ENCODE measurements at regions of chr20 and their contacts with region 1.

Region 1: DNA sequence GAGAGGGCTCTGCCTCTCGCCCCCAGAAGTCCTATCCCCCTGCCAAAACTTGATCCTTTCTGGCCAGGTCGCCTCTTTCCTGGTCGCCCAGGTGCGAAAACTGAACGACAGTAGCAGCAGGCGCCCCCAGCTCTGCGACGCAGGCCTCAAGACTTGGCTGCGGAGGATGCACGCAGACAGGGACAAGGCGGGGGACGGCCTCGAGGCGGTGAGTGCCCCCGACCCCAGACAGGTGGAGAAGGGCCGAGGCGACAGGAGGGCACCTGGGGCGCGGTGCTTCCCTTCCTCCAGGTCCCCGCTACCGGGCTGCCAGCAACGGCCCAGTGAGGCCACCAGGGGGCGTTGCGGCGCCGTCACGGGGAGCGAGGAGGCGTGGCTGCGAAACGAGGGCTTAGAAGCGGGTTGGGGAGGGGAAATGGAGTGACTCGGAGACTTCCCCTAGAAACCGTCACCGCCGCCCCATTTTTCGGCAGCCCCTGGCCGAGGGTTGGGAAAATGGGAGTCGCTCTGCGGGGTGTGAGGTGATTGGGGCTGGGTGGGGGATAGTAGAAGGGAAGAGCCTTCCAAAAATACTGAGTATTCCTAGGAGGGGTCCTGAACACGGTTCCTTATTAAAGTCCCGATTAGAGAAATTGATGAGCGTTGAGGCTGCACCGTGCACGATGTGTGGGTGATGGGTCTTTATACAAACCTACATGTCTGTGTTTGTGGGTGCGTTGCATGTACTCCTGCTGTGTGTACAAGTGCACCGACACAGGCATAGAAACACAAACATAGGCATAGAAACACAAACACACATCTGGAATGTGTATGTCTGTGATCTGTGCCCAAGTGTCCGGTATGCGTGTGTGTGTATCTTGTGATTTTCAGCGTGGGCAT is 44.6 kb downstream of the ARHGAP40 start:
- DNase-seq: peak; percentile 93
- H3K4me3 ChIP-seq: peak overlapping the region; percentile 32 to 51; a peak in 2 of 4 replicates
- H3K27ac ChIP-seq: no peak overlapping the region
- H3K4me1 ChIP-seq: peaks cover 0 to 7% of the 10 kb centered on the region in 2 experiments; a peak in 1 of 4 replicates
- H3K27me3 ChIP-seq: peaks cover 42% of the 10 kb centered on the region
- CTCF ChIP-seq: peak; percentile 88
- EP300 ChIP-seq: no peak
- RAD21 ChIP-seq: peak; percentile 91

Region 2: DNA sequence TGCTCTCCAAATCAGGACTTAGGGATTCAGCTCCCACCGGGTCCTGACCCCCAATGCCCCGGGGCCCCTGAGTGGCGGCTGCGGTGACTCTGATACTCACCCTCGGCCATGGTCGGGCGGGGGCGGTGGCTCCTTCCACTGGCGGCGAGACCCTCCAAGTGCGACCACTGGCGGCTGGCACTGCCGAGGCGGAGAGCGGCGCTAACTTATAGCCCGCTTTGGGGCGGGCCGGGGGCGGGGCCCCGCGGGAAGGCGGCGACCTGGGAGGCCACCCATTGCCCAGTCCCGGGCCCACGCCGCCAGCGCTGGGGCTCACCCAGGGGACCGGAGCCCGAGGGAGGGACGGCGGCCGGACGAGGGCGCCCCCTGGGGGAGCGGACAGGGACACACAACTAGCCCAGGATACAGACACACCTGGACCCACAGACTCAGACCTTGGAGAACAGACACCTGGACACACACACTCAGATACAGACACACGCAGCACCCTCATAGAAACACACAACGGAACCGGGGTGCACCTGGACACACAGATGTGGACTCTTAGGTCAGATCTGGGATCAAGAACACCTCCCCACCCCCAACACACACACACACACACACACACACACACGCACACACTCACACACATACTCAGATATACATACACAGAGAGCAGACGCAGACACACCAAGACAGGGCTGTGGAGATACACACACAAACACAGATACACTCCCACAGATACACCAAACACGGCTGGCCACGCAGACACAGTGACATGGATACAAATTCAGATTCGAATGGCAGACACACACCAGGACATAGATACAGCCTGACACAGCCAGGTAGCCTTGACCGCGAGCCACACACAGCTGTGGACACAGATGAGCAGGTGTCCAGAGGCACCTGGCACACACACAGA is 480.9 kb before region 1 on chr20 and contains the start of gene TGM2:
- CTCF ChIA-PET with region 1: no interaction called
- POLR2A ChIA-PET with region 1: no interaction called
- DNase-seq: peak; percentile 92
- H3K4me3 ChIP-seq: peak within 1 kb of the TSS; percentile 58 to 77
- H3K27ac ChIP-seq: peak within 1 kb of the TSS in 1 of 2 experiments; percentile 58; a peak in 3 of 4 replicates
- H3K4me1 ChIP-seq: peaks cover 35 to 36% of the 10 kb centered on the region in 2 experiments; a peak in 3 of 4 replicates
- H3K27me3 ChIP-seq: no peaks in the 10 kb centered on the region
- CTCF ChIP-seq: peak; percentile 87
- EP300 ChIP-seq: no peak
- RAD21 ChIP-seq: peak; percentile 81
- polyA plus RNA-seq, gene TGM2: 548 and 676 TPM in 2 replicates

Region 3: DNA sequence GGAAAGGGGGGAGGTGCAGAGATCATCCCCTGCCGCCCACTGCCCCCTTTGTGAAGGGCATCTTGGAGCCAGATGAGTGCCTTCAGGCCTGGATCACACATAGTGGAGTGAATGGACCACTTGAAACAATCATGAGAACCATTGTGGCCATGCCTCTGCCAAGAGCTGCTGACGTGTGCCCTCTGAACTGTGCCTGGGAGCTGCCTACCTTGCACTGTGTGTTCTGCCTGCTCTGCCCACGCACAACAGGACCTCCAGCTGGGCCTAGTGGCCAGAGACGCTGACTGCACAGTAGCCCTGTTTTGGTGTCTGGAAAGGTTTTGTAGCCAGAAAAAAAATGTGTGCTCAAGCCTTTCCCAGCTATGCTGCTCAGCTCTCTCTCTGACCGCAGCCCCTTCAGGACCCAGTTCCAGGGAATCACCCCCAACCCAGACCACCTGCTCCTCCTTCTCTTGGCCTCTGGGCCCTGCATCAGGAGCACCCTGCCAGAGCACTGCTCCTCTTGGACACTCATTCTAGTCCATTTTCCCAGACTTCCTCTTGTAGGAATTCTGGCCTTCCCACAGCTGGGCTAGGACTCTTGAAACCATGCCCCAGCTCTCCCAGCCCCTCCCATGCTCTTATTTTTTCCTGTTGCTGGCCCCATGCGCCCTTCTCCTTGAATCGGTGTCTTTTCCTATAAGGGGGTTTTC is 66.9 kb before region 1 on chr20:
- CTCF ChIA-PET with region 1: no interaction called
- POLR2A ChIA-PET with region 1: no interaction called
- DNase-seq: no peak
- H3K4me3 ChIP-seq: no peak overlapping the region
- H3K27ac ChIP-seq: peak overlapping the region in 1 of 2 experiments; percentile 60; a peak in 1 of 4 replicates
- H3K4me1 ChIP-seq: peaks cover 0 to 34% of the 10 kb centered on the region in 2 experiments; a peak in 1 of 4 replicates
- H3K27me3 ChIP-seq: no peaks in the 10 kb centered on the region
- CTCF ChIP-seq: no peak
- EP300 ChIP-seq: no peak
- RAD21 ChIP-seq: no peak

Region 4: DNA sequence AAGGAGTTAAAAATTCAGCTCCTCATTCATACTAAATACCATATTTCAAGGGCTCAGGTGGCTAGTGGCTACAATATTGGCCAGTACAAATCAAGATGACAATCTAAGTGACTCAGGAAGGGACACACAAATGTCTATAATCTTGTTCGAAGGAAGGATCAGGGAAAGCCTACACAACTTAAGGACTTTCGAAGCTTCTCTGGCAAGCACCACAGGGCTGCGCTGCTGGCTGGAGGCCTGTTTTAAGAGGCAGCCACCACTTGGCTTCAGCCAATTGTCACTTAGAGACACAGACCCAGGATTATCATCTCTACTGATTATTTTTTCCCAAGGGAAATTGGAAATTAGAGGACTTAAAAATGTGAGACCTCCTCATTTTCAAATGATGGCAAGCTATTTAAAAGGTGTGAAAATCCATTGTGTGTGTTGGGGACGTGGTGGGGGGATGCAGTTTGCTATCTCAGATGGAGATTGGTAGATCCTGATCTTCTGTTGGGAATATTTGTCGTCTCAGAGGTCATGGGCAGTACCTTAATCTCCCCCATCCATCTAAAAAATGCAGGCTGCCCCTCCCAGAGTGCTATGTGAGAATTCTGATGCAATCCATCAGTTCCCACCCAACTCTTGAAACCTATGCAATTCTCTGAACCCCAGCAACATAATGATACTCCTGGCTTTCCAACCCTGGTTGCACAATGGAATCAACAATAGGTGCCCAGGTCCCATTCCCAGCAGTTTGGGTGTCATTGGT is 33.3 kb before region 1 on chr20:
- CTCF ChIA-PET with region 1: interaction called, 12 read pairs
- POLR2A ChIA-PET with region 1: no interaction called
- DNase-seq: no peak
- H3K4me3 ChIP-seq: no peak overlapping the region
- H3K27ac ChIP-seq: no peak overlapping the region
- H3K4me1 ChIP-seq: peaks cover 0 to 6% of the 10 kb centered on the region in 2 experiments; a peak in 2 of 4 replicates
- H3K27me3 ChIP-seq: no peaks in the 10 kb centered on the region
- CTCF ChIP-seq: no peak
- EP300 ChIP-seq: no peak
- RAD21 ChIP-seq: no peak

Region 5: DNA sequence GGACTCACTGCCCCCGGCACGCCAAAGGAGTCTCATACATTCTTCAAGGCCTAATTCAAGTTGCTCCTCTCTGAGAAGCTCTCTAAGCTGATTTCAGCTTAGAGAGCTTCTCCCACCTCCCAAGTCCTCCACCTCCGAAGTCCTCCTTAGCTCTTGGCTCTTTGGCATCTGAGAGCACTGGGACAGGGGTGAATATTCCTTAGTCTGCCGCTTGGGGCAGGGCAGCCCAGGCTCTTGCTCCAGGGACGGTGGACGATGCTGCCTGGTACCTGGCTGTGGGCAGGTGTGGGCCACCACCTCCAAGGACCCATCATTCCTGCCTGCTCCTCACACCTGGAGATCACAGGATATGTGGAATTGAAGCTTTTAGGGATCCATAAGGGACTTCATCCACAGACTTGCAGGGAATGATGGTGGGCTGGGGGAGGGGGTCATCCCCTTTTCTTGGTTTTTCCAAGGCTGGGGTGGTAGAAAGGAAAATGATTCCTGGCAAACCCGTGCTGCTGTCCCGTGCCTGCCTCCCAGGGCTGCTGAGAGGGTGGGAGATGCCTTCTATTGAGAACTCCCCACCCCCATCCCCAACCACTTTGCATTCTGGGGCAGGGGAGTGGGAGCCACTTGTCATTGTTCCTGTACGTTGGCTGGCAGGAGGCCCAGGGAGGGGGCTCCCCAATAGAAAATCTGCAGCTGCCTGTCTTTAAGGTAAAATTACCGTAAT is 12.8 kb after region 1 on chr20:
- CTCF ChIA-PET with region 1: interaction called, 87 read pairs
- POLR2A ChIA-PET with region 1: no interaction called
- DNase-seq: peak; percentile 45
- H3K4me3 ChIP-seq: no peak overlapping the region; a peak in 1 of 4 replicates
- H3K27ac ChIP-seq: no peak overlapping the region
- H3K4me1 ChIP-seq: no peaks in the 10 kb centered on the region
- H3K27me3 ChIP-seq: no peaks in the 10 kb centered on the region
- CTCF ChIP-seq: peak; percentile 22; the same call in 1 of the 2 replicates
- EP300 ChIP-seq: no peak
- RAD21 ChIP-seq: peak; percentile 41

Region 6: DNA sequence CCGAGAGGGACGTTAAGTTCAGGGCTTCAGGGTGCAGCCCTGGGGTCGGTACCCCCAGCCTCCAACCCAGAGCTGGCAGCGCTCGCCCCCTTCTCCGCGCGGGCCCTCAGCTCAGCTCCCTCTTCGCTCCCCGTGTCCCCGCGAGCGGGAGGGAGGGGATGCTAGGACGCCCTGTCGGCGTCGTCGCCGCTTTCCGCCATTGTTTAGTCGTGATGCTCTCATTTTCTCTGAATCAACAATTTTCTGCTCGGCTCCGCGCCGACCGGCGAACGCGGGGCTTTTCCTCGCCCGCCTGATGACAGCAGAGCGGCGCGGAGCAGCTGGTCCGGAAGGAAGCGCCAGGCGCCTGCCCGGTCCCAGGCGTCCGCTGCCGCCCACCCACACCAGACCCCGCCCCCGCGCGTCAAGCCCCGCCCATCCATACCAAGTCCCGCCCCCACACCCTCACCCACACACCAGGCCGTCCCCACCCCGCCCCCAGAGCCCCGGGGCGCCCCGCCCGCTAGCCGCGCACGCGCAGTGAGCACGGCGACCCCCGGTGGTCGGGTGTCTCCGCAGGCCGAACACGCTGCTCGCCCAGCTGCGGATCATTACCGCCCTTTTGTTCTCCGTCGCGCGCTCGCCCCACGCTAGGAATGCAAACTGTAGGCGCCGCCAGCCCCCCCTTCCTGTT is 28.0 kb after region 1 on chr20:
- CTCF ChIA-PET with region 1: interaction called, 21 read pairs
- POLR2A ChIA-PET with region 1: no interaction called
- DNase-seq: peak; percentile 99
- H3K4me3 ChIP-seq: peak overlapping the region; percentile 59 to 76
- H3K27ac ChIP-seq: peak overlapping the region in 1 of 2 experiments; percentile 53; a peak in 1 of 4 replicates
- H3K4me1 ChIP-seq: peaks cover 0 to 15% of the 10 kb centered on the region in 2 experiments; a peak in 1 of 4 replicates
- H3K27me3 ChIP-seq: no peaks in the 10 kb centered on the region
- CTCF ChIP-seq: no peak
- EP300 ChIP-seq: no peak
- RAD21 ChIP-seq: no peak

Region 7: GRCh38 chr20:38706501-38706900 is 60.3 kb after region 1 on chr20:
- CTCF ChIA-PET with region 1: interaction called, 11 read pairs
- POLR2A ChIA-PET with region 1: no interaction called
- DNase-seq: peak; percentile 81
- H3K4me3 ChIP-seq: no peak overlapping the region
- H3K27ac ChIP-seq: no peak overlapping the region
- H3K4me1 ChIP-seq: peaks cover 0 to 8% of the 10 kb centered on the region in 2 experiments; a peak in 1 of 4 replicates
- H3K27me3 ChIP-seq: 0 out of 2 replicates have a peak, but pooled peaks cover 6% of the 10 kb centered on the region
- CTCF ChIP-seq: no peak
- EP300 ChIP-seq: peak in 1 of 2 experiments; percentile 76; a peak in 1 of 4 replicates
- RAD21 ChIP-seq: no peak; the same call in 1 of the 2 replicates

Region 8: GRCh38 chr20:38730989-38731737 is 84.9 kb after region 1 on chr20:
- CTCF ChIA-PET with region 1: interaction called, 510 read pairs
- POLR2A ChIA-PET with region 1: no interaction called
- DNase-seq: peak; percentile 90
- H3K4me3 ChIP-seq: peak overlapping the region; percentile 41 to 53
- H3K27ac ChIP-seq: no peak overlapping the region
- H3K4me1 ChIP-seq: peaks cover 0 to 16% of the 10 kb centered on the region in 2 experiments; a peak in 2 of 4 replicates
- H3K27me3 ChIP-seq: peaks cover 93% of the 10 kb centered on the region
- CTCF ChIP-seq: peak; percentile 97
- EP300 ChIP-seq: no peak
- RAD21 ChIP-seq: peak; percentile 73

Region 9: DNA sequence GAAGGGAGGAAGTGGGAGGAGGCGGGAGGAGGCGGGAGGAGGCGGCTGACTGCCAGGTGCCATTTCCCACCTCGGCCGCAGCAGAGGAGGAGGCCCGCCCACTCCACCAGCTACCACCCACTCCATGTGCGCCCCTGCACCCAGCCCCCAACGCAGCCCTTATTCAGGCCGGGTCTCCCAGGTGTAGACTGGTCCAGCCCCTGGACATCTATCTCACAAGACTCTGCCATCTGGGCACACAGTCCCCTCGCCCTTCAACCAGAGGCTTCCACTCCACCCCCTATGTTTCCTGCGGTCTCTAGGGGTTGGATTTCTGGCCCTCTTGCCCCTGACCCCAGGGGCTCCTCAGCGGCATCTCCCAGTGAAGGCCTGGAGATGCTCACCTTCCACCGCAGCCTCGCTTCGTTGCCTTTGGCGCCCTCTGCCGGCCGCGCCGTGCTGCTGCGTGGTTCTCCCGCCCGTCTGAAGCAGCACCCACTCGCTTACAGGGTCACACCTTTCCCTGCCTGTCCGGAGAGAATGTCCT is 247.4 kb after region 1 on chr20:
- CTCF ChIA-PET with region 1: interaction called, 13 read pairs
- POLR2A ChIA-PET with region 1: no interaction called
- DNase-seq: peak; percentile 91
- H3K4me3 ChIP-seq: no peak overlapping the region; a peak in 2 of 4 replicates
- H3K27ac ChIP-seq: peak overlapping the region in 1 of 2 experiments; percentile 80; a peak in 2 of 4 replicates
- H3K4me1 ChIP-seq: peaks cover 0 to 36% of the 10 kb centered on the region in 2 experiments; a peak in 1 of 4 replicates
- H3K27me3 ChIP-seq: peaks cover under 1% of the 10 kb centered on the region; the same call in 1 of the 2 replicates
- CTCF ChIP-seq: peak; percentile 83
- EP300 ChIP-seq: no peak
- RAD21 ChIP-seq: peak; percentile 88